Adrenal gland (tissue), 19 donors: ENCODE measurements at regions of chr16 and their contacts with region 1.

Region 1: DNA sequence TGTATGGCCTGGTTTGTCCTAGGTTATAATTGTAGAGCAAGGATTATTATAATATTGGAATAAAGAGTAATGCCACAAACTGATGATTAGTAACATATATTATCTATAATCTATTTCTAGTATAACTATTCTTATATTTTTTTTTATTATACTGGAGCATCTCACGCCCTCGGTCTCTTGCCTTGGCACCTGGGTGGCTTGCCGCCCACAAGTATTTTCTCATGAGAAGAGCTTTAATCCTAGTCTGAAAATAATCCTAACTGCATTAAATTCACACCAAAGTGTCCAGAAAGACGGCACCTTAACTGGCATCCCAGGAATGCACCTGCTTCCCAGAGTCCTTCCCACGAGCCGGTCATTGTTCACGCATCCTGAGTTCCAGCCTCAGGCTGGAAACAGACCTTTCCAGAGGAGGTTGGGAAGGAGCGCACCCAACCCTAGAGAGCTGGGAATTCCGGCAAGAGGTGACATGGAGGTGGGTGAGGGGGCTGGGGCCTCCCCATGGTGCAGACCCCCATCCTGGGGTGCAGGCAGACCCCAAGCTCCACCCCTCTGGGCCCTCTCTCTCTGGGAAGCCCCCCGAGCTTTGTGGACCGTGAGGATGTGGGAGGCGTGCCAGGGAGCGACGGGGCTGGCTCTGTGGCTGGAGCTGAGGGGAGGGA is 15.9 kb downstream of the CHMP1A start:
- DNase-seq: no peak
- H3K4me3 ChIP-seq: peak overlapping the region in 1 of 4 donors; percentile 35
- H3K27ac ChIP-seq: peak overlapping the region in 1 of 5 donors; percentile 69
- H3K4me1 ChIP-seq: peaks cover 0 to 9% of the 10 kb centered on the region in 2 donors
- H3K27me3 ChIP-seq: no peaks in the 10 kb centered on the region
- CTCF ChIP-seq: no peak
- POLR2A ChIP-seq: no peak

Region 2: DNA sequence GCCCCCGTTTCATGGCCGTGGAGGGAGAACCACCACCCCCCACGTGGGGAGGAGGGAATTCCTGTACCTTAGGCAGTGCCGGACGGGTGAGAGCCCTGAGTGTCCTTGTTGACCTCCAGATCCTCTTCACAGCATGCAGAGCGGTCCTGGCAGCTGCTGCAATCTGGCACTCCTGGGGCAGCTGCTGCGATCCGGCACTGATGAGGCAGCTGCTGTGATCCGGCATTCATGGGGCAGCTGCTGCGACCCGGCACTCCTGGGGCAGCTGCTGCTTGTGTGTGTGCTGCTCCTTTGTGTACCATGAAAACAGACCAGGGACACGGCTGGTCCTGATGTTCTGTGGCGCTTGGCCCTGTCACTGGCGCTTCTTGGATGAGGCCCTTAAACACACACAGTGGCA is 411.3 kb before region 1 on chr16:
- intact Hi-C with region 1: loop called in 1 of 2 experiments (anchors 10 kb)
- DNase-seq: no peak
- H3K4me3 ChIP-seq: no peak overlapping the region
- H3K27ac ChIP-seq: no peak overlapping the region
- H3K4me1 ChIP-seq: no peaks in the 10 kb centered on the region
- H3K27me3 ChIP-seq: no peaks in the 10 kb centered on the region
- CTCF ChIP-seq: no peak
- POLR2A ChIP-seq: no peak

Region 3: GRCh38 chr16:89545831-89546574 is 95.6 kb before region 1 on chr16:
- intact Hi-C with region 1: no loop called
- DNase-seq: no peak
- H3K4me3 ChIP-seq: no peak overlapping the region
- H3K27ac ChIP-seq: no peak overlapping the region
- H3K4me1 ChIP-seq: no peaks in the 10 kb centered on the region
- H3K27me3 ChIP-seq: no peaks in the 10 kb centered on the region
- CTCF ChIP-seq: no peak
- POLR2A ChIP-seq: no peak

Region 4: DNA sequence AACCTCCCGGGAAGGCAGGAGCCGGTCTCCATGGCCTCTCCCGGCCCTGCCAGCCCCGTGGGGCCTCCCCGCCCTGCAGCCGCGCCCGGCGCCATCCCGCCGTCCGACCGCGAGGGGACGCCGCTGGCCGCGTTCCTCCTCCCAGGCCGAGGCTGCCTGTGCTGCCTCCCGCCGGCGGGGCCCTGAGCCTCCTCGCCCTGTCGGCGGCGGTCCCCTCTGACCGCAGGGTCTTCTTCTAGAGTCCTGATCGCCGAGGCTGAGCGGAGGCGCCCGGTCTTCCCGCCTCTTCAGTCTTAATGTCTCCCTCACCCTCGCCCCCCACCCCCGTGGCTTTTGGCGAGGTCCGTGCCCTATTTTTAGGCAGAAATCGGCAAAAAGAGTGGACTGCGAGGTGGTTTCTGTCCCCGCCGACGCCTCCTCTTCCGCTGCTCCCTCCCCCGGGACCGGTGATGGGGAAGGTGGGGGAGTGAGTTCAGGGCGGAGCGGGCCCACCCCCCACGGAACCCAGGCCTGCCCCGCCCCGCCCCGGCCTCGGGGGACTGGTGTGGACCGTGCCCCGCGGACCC is 66.8 kb before region 1 on chr16:
- intact Hi-C with region 1: loop called in 1 of 2 experiments (anchors 5 kb)
- DNase-seq: peak in 3 of 7 donors; percentile 40 to 58 (median 41)
- H3K4me3 ChIP-seq: peak overlapping the region in 1 of 4 donors; percentile 33
- H3K27ac ChIP-seq: no peak overlapping the region
- H3K4me1 ChIP-seq: peaks cover 0 to 13% of the 10 kb centered on the region in 2 donors
- H3K27me3 ChIP-seq: peaks cover 32% of the 10 kb centered on the region
- CTCF ChIP-seq: peak in 3 of 6 experiments; percentile 57 to 73 (median 60)
- POLR2A ChIP-seq: no peak

Region 5: GRCh38 chr16:89686520-89687091 is 45.0 kb after region 1 on chr16 and contains the start of gene CDK10:
- intact Hi-C with region 1: no loop called
- DNase-seq: peak; percentile 83 to 95 (median 93)
- H3K4me3 ChIP-seq: peak within 1 kb of the TSS; percentile 42 to 82 (median 68)
- H3K27ac ChIP-seq: peak within 1 kb of the TSS in 4 of 5 donors; percentile 49 to 81 (median 68)
- H3K4me1 ChIP-seq: peaks cover 8 to 10% of the 10 kb centered on the region in 2 donors
- H3K27me3 ChIP-seq: no peaks in the 10 kb centered on the region
- CTCF ChIP-seq: no peak
- POLR2A ChIP-seq: peak; percentile 53 to 54
- total RNA-seq, gene CDK10: 31.5 to 127 (median 62.1) TPM